ENCODE measurements at regions of chr3 and their contacts with region 1.

Region 1: DNA sequence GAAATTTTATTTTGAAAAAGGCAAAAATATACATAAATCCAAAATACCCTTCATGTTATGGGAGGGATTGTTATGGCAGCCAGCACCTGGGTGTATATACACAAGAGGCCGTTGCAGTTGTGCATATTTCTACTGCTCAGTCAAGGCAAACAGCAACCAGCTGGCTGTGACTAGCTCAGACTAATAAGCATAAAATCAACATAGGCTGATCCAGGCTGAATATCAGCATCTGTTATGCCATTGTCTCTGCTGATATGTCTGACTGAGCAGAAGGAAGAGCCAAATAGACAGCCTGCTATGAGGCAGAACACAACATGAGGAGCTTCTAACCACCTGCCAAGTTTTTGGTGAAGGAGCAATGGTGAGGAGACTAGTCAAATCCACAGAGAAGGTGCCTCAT is 457.5 kb upstream of the ALCAM start:
- H3K4me3 ChIP-seq: no peak overlapping the region
- H3K27ac ChIP-seq: no peak overlapping the region
- H3K4me1 ChIP-seq: no peaks in the 10 kb centered on the region
- CTCF ChIP-seq: no peak

Region 2: GRCh38 chr3:104947943-104948342 is 38.7 kb after region 1 on chr3:
- CTCF ChIA-PET with region 1: no interaction called
- POLR2A ChIA-PET with region 1: interaction called, 10 read pairs
- H3K4me3 ChIP-seq: no peak overlapping the region
- H3K27ac ChIP-seq: no peak overlapping the region
- H3K4me1 ChIP-seq: no peaks in the 10 kb centered on the region
- CTCF ChIP-seq: no peak

Measured in HEK293 (cell line).